WTC11 (cell line): ENCODE measurements at regions of chr6 and their contacts with region 1.

Region 1: GRCh38 chr6:30672445-30673253 is at the start of gene DHX16:
- DNase-seq: peak; percentile 89
- ATAC-seq: peak; percentile 83
- H3K4me3 Mint-ChIP-seq: peak within 1 kb of the TSS; percentile 93
- H3K27ac Mint-ChIP-seq: peak within 1 kb of the TSS; percentile 58
- H3K4me1 Mint-ChIP-seq: peaks cover 8% of the 10 kb centered on the region
- H3K27me3 Mint-ChIP-seq: no peaks in the 10 kb centered on the region
- CTCF ChIP-seq: peak; percentile 40; the same call in 1 of the 2 replicates
- total RNA-seq, gene DHX16: 27.3 to 32.2 TPM (median 30.6 TPM) in 3 replicates

Region 2: GRCh38 chr6:30646458-30647241 is 26.0 kb before region 1 on chr6 and contains the start of gene C6orf136:
- CTCF ChIA-PET with region 1: interaction called, 10 read pairs
- POLR2A ChIA-PET with region 1: interaction called, 3 read pairs
- DNase-seq: peak; percentile 91
- ATAC-seq: peak; percentile 71
- H3K4me3 Mint-ChIP-seq: peak within 1 kb of the TSS; percentile 76
- H3K27ac Mint-ChIP-seq: peak within 1 kb of the TSS; percentile 74
- H3K4me1 Mint-ChIP-seq: peaks cover 21% of the 10 kb centered on the region
- H3K27me3 Mint-ChIP-seq: no peaks in the 10 kb centered on the region
- CTCF ChIP-seq: no peak
- total RNA-seq, gene C6orf136: 21.8 to 26.5 TPM (median 25.5 TPM) in 3 replicates

Region 3: DNA sequence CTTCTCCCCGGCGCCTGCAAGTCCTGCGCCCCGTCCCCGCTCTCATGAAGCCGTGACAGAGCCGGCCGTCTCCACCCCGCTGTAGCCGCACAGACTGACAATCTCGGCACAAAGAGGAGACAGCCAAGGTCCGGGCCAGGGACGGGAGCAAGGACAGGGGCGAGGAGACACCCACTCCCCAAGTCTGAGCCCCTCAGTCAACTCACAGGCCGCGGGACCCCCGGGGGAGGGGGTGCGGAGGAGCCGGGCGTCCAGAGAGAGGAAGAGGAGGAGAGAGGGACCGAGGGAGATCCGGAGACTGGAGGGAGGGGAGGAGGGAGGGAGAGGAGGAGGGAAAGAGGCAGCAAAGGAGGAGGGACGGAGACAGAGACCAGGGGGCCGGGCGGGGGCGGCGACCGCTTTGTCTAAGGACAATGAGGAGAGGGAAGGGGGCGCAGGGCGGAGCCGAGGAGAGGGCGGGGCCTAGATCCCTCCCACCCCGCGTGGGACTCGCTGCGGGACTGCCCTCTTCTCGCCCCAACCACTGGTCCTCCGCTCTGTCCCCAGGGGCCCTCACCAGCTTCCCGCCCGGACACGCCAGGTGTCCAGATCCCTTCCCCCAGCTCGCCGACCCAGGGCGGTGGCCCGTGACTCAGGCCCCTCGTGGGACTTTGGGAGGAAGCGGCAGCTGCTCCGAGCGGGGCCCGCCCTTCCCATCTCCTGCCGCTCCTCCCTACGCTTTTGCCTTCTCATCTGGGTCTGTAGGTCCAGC is 14.4 kb after region 1 on chr6:
- CTCF ChIA-PET with region 1: interaction called, 13 read pairs
- POLR2A ChIA-PET with region 1: no interaction called
- DNase-seq: peak; percentile 92
- ATAC-seq: peak; percentile 43
- H3K4me3 Mint-ChIP-seq: peak overlapping the region; percentile 80
- H3K27ac Mint-ChIP-seq: 0 out of 2 replicates have a peak overlapping the region, but pooled peaks have one; percentile 39
- H3K4me1 Mint-ChIP-seq: peaks cover 75% of the 10 kb centered on the region
- H3K27me3 Mint-ChIP-seq: no peaks in the 10 kb centered on the region
- CTCF ChIP-seq: no peak